ENCODE measurements at regions of chr10 and their contacts with region 1.

Region 1: DNA sequence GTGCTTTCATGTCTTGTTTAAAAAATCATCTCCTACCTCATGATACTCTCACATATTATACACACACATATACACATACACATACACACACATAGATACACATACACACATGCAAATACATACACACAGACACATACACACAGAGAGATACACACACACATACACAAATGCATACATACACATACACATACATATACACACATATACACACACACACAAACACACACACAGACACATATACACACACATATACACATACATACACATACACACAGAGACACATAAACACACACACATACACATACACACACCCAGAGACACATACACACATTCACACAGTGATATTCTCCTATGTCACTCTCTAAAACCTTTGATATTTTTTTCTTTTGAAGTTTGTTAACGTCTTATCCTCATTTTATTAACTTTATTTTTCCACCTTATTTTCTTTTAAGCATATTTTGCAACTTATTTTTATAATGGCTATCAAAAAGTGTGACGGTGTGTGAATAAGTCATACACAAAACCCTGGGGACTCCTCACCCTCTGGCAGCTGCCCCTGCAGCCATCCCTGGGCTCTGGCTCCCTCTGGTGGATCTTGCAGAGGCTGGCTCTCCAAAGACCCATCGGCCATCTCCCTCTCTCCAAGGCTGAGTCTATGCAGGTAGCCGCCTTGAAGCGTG is 3.9 kb upstream of the C10orf120 start:
- DNase-seq: peak; percentile 67
- H3K4me3 ChIP-seq: no peak overlapping the region
- H3K27ac ChIP-seq: no peak overlapping the region
- H3K4me1 ChIP-seq: peaks cover 11% of the 10 kb centered on the region
- H3K27me3 ChIP-seq: peaks cover 7% of the 10 kb centered on the region
- CTCF ChIP-seq: peak; percentile 92

Region 2: DNA sequence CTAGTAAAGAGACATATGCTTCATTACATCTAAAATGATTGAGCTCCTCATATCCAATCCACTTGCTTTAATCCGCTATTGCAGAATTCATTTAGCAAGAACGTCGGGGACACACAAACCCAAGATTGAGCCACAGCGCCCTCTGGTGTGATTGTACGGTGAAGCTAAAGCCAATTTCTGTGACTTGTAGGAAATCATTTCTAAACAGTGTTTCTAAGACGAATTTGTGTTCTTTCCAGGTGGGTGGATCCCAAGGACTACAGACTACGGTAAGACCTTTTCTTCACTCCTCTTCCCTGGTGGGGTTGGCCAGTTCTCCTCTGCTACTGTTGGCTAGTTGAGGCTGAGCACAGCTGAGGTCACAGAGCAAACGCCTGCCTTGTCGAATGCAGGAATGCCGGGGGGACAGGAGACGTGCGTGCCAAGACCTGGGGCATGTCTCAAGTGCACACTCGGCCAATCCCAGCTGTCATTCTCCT is 137.8 kb before region 1 on chr10:
- intact Hi-C with region 1: loop called (anchors 10 kb)
- DNase-seq: peak; percentile 77
- H3K4me3 ChIP-seq: peak overlapping the region; percentile 38
- H3K27ac ChIP-seq: no peak overlapping the region
- H3K4me1 ChIP-seq: peaks cover 7% of the 10 kb centered on the region
- H3K27me3 ChIP-seq: peaks cover 23% of the 10 kb centered on the region
- CTCF ChIP-seq: peak; percentile 90

Region 3: DNA sequence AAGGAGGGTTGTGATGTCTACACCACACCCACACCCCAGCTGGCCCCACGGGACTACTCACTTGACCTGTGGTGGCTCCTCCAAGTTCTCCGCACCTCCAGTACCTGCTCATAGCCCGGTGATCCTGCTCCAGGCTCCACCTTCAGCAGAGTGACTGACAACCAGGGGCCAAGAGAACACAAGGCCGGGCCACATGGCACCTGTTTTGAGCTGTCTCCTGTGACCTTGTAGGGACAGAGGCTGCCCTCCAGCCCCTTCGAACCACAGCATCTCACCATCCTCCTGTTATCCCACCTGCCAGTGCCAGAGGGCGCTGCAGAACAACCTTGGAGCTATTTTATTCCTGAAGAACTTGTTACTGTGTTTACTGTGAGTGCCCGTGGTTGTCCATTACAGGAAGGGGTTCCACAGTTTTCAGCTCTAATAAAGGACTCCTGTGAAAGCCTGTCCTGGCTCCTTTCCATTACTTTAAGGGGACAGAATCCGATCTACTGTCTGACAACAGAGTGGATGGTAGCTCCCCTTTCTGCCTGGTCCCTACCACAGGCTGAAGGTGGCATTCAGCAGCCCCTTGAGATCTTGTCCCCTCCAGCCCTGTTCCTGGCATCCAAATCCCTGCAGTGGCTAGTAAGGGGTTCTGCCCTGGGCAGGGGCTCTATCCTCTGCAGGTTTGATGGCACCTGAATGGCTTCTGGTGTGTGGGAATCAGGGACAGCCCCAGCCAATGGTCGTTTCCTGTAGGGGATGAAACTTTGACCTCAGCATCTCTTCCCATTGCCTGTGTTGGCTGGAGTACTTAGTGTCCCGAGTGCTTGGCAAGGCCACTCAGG is 54.8 kb before region 1 on chr10:
- intact Hi-C with region 1: loop called (anchors 5 kb)
- DNase-seq: peak; percentile 57
- H3K4me3 ChIP-seq: no peak overlapping the region
- H3K27ac ChIP-seq: no peak overlapping the region
- H3K4me1 ChIP-seq: peaks cover 5% of the 10 kb centered on the region
- H3K27me3 ChIP-seq: peaks cover 22% of the 10 kb centered on the region
- CTCF ChIP-seq: peak; percentile 89

Region 4: GRCh38 chr10:122749886-122750285 is 46.3 kb after region 1 on chr10:
- intact Hi-C with region 1: no loop called
- DNase-seq: no peak
- H3K4me3 ChIP-seq: no peak overlapping the region
- H3K27ac ChIP-seq: no peak overlapping the region
- H3K4me1 ChIP-seq: no peaks in the 10 kb centered on the region
- H3K27me3 ChIP-seq: peaks cover 62% of the 10 kb centered on the region
- CTCF ChIP-seq: no peak

Region 5: DNA sequence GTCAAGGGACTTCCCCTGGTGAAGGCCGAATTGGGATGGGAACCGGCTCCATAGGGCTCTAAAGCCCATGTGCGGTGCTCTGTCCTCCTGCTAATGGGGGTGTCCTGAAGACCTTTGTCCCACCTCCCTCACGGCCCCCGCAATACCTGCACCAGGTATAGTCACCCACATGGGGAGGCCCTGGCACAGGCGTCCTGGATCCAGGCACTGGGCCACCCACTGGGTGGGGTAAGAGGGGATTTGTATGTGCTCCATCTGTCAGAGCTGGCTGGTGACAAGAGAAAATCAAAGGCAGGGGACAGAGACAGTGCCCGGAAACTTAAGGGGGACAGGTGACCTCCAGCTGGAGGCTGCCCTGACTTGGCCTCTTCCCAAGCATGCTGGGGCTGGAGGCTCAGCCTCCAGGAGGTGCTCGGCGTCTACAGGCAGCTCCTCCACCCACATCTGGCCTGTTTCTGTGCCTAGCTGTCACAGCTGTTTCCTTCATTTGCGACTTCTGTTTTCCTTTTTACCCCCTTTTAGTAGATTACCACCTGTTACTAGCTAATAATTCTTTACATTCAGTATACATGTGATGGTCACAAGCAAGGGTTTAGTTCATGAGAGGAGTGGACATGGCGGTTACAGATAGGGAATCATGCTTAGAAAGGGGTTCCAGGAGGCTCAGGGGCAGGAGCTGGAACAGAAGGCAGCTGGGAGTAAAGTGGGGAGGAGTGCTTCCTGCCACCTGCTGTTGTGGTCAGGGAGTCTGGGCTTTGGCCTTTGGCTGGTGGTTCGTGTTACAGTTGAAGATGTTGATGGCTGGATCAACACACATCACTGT is 144.4 kb after region 1 on chr10:
- intact Hi-C with region 1: no loop called
- DNase-seq: no peak
- H3K4me3 ChIP-seq: no peak overlapping the region
- H3K27ac ChIP-seq: no peak overlapping the region
- H3K4me1 ChIP-seq: no peaks in the 10 kb centered on the region
- H3K27me3 ChIP-seq: peaks cover 9% of the 10 kb centered on the region
- CTCF ChIP-seq: no peak